OCI-LY7 (cell line): ENCODE measurements at regions of chr4 and their contacts with region 1.

Region 1: DNA sequence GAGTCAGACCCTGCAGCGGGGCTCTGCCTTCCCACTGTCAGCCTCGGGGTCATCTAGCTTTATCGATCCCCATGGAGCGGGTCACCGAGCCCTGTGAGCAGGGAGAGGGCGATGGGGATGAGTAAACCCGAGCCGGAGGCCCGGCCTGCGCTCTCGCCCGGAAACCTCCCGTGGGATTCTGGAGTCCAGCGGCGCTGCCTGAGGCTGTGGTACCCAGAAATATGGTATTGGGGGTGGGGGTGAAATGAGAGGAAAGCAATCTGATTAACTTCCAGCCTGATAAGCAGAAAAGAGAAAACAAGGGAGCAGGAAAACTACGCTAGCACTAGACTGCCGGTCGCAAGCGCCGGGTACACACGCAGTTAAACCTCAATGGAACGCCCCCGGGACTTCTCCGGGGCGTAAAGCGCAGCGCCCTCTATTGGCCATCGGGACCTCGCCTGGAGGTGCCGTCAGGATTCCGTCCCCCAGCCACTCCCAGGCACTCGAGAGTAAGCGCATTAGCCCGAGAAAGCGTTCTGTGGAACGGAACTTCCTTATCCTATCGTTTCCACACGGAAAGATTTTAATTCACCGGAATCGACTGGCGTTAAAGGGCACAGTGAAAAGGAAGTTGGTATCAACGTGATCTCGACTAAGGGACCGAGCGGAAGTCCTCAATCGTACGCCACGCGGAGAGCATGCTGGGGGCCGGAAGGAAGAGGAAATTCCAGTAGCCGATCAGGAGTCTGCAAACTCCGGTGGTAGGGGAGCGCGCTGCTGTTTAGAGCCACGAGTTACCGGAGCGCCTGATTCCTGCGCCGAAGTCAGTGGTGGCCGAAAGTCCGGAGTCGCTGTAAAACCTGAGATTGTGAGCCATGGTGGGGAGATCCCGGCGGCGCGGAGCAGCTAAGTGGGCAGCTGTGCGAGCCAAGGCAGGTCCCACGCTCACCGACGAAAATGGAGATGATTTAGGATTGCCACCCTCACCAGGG is at the start of gene UTP3:
- DNase-seq: peak; percentile 96
- H3K4me3 ChIP-seq: peak within 1 kb of the TSS; percentile 88
- H3K27ac ChIP-seq: peak within 1 kb of the TSS; percentile 84
- H3K4me1 ChIP-seq: peaks cover 60% of the 10 kb centered on the region
- CTCF ChIP-seq: peak; percentile 99
- total RNA-seq, gene UTP3: 34.0 and 51.5 TPM in 2 replicates

Region 2: DNA sequence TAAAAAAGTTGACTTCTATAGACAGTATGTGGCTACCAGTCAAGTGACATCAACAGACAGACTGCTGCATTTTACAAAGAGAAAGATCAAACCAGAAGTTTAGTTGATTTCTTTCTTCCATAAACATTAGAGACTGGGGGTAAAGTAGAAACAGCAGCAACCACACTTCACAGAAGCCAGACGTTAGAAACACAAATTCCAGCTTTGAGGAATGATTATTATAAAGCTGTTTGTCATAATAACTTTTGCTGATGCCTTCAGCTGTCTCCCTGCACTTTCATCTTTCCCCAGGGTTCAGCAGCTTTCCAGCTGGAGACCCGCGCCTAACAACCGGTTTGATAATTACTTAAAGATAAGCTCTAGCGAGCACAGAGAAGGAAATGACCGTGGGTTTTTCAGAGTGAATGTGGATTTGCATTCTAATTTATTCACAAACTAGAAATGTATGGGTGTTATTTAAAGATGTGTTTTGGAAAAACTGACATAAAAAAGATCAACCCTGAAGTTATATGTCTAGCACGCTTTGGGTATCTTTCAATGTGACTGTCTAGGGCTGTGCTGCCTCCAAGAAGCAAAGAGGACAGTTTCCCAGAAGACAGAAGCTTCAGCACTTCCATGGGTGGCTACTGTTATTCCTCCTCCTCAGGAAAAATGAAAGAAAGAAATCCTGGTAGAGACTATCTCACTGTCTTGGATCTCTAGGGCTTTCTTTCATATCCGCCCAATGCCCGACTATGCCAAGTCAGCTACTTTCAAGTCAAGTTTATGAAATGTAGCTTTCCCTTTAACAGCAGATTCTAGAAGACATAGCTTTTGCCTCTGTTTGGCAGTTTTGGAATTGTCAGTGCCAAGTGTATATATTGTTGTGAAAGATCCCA is 74.6 kb before region 1 on chr4:
- CTCF ChIA-PET with region 1: no interaction called
- POLR2A ChIA-PET with region 1: interaction called, 11 read pairs
- intact Hi-C with region 1: no loop called
- DNase-seq: peak; percentile 47
- H3K4me3 ChIP-seq: peak overlapping the region; percentile 34
- H3K27ac ChIP-seq: no peak overlapping the region
- H3K4me1 ChIP-seq: peaks cover 20% of the 10 kb centered on the region
- CTCF ChIP-seq: no peak

Region 3: GRCh38 chr4:70629469-70630090 is 58.5 kb before region 1 on chr4:
- CTCF ChIA-PET with region 1: no interaction called
- POLR2A ChIA-PET with region 1: no interaction called
- intact Hi-C with region 1: no loop called
- DNase-seq: no peak
- H3K4me3 ChIP-seq: no peak overlapping the region
- H3K27ac ChIP-seq: no peak overlapping the region
- H3K4me1 ChIP-seq: peaks cover 18% of the 10 kb centered on the region
- CTCF ChIP-seq: no peak

Region 4: DNA sequence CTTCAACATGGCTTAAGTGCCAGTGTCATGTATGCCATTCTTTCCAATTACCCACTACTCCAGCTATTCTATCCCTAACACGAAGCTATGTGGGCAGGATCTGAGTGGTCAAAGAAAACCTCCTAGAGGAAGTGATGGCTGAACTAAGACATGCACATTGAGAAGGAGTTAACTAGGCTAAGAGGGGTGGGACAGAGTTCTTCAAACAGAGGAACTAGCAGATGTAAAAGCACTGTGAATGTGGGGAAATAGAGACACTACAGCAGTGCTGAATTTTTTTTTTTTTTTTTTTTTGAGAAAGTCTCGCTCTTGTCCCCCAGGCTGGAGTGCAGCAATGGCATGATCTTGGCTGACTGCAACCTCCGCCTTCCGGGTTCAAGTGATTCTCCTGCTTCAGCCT is 28.0 kb before region 1 on chr4:
- CTCF ChIA-PET with region 1: interaction called, 4 read pairs
- POLR2A ChIA-PET with region 1: interaction called, 837 read pairs
- intact Hi-C with region 1: loop called (anchors 1 kb)
- DNase-seq: peak; percentile 63
- H3K4me3 ChIP-seq: peak overlapping the region; percentile 98
- H3K27ac ChIP-seq: peak overlapping the region; percentile 91
- H3K4me1 ChIP-seq: peaks cover 56% of the 10 kb centered on the region
- CTCF ChIP-seq: no peak

Region 5: DNA sequence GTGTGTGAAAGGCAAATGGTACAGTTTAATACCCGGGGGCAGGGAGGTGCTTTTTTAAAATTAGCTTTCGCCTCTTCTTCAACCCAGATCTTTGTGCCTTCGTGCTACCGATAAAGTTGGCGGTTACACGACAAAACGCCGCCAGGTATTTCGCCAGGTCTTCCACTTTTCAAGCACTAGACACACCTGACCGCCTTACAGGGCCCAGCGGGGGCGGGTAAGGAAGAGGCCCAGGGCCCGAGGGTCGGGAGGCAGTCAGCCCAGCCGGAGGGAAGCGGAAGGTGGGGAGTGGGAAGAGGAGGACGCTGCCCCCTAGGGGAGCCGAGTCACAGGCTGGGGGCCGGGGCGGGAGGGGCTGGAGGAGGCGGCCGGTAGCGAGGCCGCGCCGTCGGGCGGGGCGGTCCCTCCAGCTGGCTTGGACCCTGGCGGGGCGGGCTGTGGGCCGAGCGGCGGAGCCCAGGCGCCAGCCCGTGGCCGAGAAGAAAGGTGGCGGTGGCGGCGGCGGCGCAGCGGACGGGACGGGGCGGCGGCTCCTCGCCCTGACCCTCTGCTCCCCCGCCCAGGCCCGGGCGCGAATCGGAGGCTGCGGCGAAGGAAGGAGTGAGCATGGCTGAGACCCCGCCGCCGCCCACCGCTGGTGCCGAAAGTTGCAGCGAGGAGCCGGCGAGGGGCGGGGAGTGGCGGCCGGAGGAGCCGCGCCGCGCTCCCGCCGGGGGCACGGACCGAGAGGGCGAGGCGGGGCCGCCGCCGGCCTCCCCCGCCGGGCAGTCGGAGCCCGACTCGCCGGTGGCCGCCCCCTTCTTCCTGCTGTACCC is 16.4 kb after region 1 on chr4:
- CTCF ChIA-PET with region 1: interaction called, 9 read pairs
- POLR2A ChIA-PET with region 1: interaction called, 127 read pairs
- intact Hi-C with region 1: loop called (anchors 1 kb)
- DNase-seq: peak; percentile 85
- H3K4me3 ChIP-seq: peak overlapping the region; percentile 90
- H3K27ac ChIP-seq: peak overlapping the region; percentile 77
- H3K4me1 ChIP-seq: peaks cover 32% of the 10 kb centered on the region
- CTCF ChIP-seq: peak; percentile 71

Region 6: DNA sequence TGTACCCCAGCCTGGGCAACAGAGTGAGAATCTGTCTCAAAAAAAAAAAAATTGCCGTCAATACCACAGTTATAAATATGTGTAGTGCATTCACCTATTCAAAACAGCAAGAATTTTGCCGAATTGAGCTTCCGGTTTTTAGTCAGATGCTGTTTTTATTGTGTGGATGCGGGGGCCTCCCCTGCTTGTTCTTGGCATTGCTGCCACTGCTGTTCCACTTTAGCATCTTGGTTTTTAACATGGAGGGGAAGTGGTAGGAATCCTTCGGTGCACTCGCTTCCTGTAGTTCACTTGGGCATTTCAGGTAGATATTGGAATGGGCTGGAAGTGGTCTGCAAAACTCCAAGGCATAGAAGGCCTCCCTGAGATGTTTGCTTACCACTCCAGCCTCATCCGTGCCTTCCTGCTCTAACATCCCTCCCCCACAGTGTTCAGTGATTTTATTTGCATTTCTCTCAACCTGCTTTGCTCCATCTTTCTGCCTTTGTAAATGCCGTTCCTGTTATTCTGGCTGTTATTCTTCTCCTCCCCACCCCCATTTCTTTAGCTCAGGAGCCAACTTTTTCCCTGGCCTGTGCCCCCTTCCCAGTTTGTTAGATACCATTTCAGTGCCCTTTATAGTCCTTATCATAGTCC is 239.5 kb after region 1 on chr4:
- CTCF ChIA-PET with region 1: no interaction called
- POLR2A ChIA-PET with region 1: interaction called, 5 read pairs
- intact Hi-C with region 1: loop called (anchors 5 kb)
- DNase-seq: peak; percentile 81
- H3K4me3 ChIP-seq: peak overlapping the region; percentile 63
- H3K27ac ChIP-seq: peak overlapping the region; percentile 88
- H3K4me1 ChIP-seq: peaks cover 94% of the 10 kb centered on the region
- CTCF ChIP-seq: peak; percentile 48